Activated CD4-positive, alpha-beta memory T cell treated with anti-CD3 and anti-CD28 coated beads for 36 hours (primary cell): ENCODE measurements at regions of chr9 and their contacts with region 1.

Region 1: DNA sequence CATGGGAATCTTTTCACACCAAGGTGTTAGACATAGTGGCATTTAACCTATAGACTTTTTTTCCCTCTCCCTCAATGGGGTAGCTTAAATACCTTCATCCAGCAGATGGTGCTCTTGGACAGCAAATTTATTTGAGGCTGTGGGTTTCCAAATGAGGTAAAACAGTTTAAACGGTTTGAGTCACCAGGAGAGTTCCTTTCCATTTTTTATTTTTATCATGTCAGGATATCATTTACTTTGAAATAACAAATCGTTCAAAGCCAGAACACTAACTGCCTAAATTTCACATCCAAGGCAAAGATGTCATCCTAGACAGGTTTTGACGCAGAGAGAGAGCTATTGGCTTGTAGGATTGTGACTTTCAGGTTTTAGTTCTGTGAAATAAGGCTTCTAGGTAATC is 69.7 kb downstream of the KDM4C start:
- DNase-seq: peak; percentile 32
- H3K4me3 Mint-ChIP-seq: no peak overlapping the region
- H3K27ac Mint-ChIP-seq: no peak overlapping the region
- H3K4me1 Mint-ChIP-seq: peaks cover 9% of the 10 kb centered on the region
- H3K27me3 Mint-ChIP-seq: no peaks in the 10 kb centered on the region

Region 2: GRCh38 chr9:6619909-6620308 is 207.5 kb before region 1 on chr9:
- CTCF ChIA-PET with region 1: no interaction called
- POLR2A ChIA-PET with region 1: no interaction called
- intact Hi-C with region 1: no loop called
- DNase-seq: no peak
- H3K4me3 Mint-ChIP-seq: no peak overlapping the region
- H3K27ac Mint-ChIP-seq: no peak overlapping the region
- H3K4me1 Mint-ChIP-seq: peaks cover 2% of the 10 kb centered on the region
- H3K27me3 Mint-ChIP-seq: peaks cover 6% of the 10 kb centered on the region

Region 3: GRCh38 chr9:6845880-6846279 is 18.4 kb after region 1 on chr9:
- CTCF ChIA-PET with region 1: interaction called, 10 read pairs
- POLR2A ChIA-PET with region 1: no interaction called
- intact Hi-C with region 1: no loop called
- DNase-seq: no peak
- H3K4me3 Mint-ChIP-seq: no peak overlapping the region
- H3K27ac Mint-ChIP-seq: no peak overlapping the region
- H3K4me1 Mint-ChIP-seq: peaks cover 3% of the 10 kb centered on the region
- H3K27me3 Mint-ChIP-seq: no peaks in the 10 kb centered on the region

Region 4: GRCh38 chr9:7055201-7055903 is 227.9 kb after region 1 on chr9:
- CTCF ChIA-PET with region 1: interaction called, 18 read pairs
- POLR2A ChIA-PET with region 1: no interaction called
- intact Hi-C with region 1: loop called (anchors 5 kb)
- DNase-seq: no peak
- H3K4me3 Mint-ChIP-seq: no peak overlapping the region
- H3K27ac Mint-ChIP-seq: no peak overlapping the region
- H3K4me1 Mint-ChIP-seq: peaks cover 10% of the 10 kb centered on the region
- H3K27me3 Mint-ChIP-seq: no peaks in the 10 kb centered on the region

Region 5: GRCh38 chr9:7186175-7186574 is 358.7 kb after region 1 on chr9:
- CTCF ChIA-PET with region 1: interaction called, 9 read pairs
- POLR2A ChIA-PET with region 1: no interaction called
- intact Hi-C with region 1: loop called (anchors 2 kb)
- DNase-seq: peak; percentile 13
- H3K4me3 Mint-ChIP-seq: no peak overlapping the region
- H3K27ac Mint-ChIP-seq: no peak overlapping the region
- H3K4me1 Mint-ChIP-seq: no peaks in the 10 kb centered on the region
- H3K27me3 Mint-ChIP-seq: no peaks in the 10 kb centered on the region

Region 6: GRCh38 chr9:7534211-7534935 is 706.9 kb after region 1 on chr9:
- CTCF ChIA-PET with region 1: interaction called, 11 read pairs
- POLR2A ChIA-PET with region 1: no interaction called
- intact Hi-C with region 1: loop called (anchors 1 kb)
- DNase-seq: peak; percentile 23
- H3K4me3 Mint-ChIP-seq: no peak overlapping the region
- H3K27ac Mint-ChIP-seq: peak overlapping the region; percentile 31
- H3K4me1 Mint-ChIP-seq: peaks cover 13% of the 10 kb centered on the region
- H3K27me3 Mint-ChIP-seq: peaks cover 16% of the 10 kb centered on the region